ENCODE measurements at regions of chr19 and their contacts with region 1.

Region 1: GRCh38 chr19:1241417-1242095 is at the start of gene ATP5F1D:
- DNase-seq: peak; percentile 90 to 97
- H3K4me3 ChIP-seq: peak within 1 kb of the TSS; percentile 76 to 84
- H3K27ac ChIP-seq: peak within 1 kb of the TSS; percentile 98 to 99
- H3K4me1 ChIP-seq: peaks cover 15 to 86% (median 79%) of the 10 kb centered on the region in 4 donors
- H3K27me3 ChIP-seq: peaks cover 0 to 7% of the 10 kb centered on the region in 2 donors
- CTCF ChIP-seq: peak in 1 of 2 experiments; percentile 6

Region 2: GRCh38 chr19:1103708-1104310 is 137.7 kb before region 1 on chr19 and contains the start of gene GPX4:
- intact Hi-C with region 1: loop called (anchors 2 kb)
- DNase-seq: peak; percentile 99 to 100
- H3K4me3 ChIP-seq: peak within 1 kb of the TSS; percentile 95 to 98
- H3K27ac ChIP-seq: peak within 1 kb of the TSS; percentile 99 to 100
- H3K4me1 ChIP-seq: peaks cover 7 to 77% (median 63%) of the 10 kb centered on the region in 4 donors
- H3K27me3 ChIP-seq: no peaks in the 10 kb centered on the region
- CTCF ChIP-seq: peak in 1 of 2 experiments; percentile 6

Region 3: GRCh38 chr19:1113033-1113985 is 128.2 kb before region 1 on chr19:
- intact Hi-C with region 1: loop called (anchors 1 kb)
- DNase-seq: peak; percentile 97 to 98
- H3K4me3 ChIP-seq: no peak overlapping the region
- H3K27ac ChIP-seq: peak overlapping the region; percentile 76 to 84
- H3K4me1 ChIP-seq: peaks cover 0 to 27% (median 18%) of the 10 kb centered on the region in 4 donors
- H3K27me3 ChIP-seq: no peaks in the 10 kb centered on the region
- CTCF ChIP-seq: peak; percentile 94 to 96

Region 4: DNA sequence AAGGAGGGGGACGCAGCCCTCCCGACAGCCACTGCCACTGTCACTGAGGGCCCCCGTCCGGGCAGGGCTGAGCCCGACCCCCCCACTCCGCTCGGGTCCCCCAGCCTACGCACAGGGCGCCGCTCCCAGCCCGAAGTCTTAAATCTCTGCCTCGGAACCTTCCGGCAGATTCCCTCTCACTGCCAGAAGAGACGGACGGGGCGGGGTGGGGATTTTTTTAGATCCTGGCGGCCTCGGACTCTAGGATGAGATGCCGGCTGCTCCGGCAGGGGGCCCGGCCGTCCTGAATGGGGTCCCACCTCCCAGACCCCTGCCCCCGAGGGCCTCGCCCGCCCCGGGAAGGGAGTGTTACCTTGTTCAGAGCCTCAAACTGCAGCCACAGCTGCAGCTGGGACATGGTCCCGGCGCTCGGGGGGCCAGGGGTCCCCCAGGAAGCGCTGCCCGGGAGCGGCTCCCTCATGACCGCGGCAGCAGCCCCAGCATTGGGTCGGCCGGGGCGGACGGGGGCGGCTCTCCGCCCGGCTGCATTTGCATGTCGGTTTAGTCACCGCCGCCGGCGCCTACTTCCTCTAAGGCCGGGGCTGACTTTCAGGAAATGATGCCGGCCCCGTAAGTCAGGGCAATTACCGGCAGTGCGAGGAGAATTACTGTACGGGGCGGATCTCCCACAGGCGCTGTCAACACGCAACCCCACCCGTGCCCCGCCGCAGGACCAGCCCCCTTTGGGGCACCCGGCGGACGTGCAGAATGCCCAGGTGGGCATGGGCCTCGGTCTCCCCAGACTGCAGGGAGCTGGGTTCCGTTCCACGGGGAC is 109.6 kb before region 1 on chr19:
- intact Hi-C with region 1: no loop called
- DNase-seq: peak; percentile 92
- H3K4me3 ChIP-seq: peak overlapping the region; percentile 64 to 67
- H3K27ac ChIP-seq: peak overlapping the region; percentile 86
- H3K4me1 ChIP-seq: peaks cover 0 to 61% (median 48%) of the 10 kb centered on the region in 4 donors
- H3K27me3 ChIP-seq: no peaks in the 10 kb centered on the region
- CTCF ChIP-seq: peak; percentile 17 to 47

Region 5: DNA sequence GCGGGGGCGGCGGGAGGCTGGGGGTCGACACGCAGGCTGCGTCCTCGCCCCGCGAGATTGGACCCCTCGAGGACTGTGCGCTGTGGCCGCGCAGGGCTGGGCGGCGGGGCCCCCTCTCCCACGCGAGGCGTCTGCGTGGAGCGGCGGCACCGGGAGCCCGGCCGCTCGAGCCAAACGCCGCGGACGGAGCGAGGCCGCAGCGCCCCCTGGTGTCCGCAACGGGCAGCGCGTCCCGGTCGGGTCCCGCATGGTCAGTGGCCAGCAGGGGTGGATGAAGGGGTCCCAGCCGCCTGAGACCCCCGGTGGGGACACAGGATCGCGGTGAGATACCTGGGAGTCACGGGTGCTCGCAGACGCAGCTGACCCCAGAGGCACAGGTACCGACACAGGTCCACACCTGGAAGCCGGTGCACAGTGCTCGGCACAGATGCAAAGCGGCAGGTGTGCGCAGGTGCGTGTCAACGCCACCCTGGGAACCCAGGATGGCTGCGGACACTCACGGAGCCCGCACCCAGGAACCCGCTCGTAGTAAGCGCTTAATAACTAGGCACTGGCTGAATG is 25.4 kb after region 1 on chr19:
- intact Hi-C with region 1: loop called (anchors 1 kb)
- DNase-seq: peak; percentile 50 to 88
- H3K4me3 ChIP-seq: peak overlapping the region; percentile 50 to 68
- H3K27ac ChIP-seq: peak overlapping the region; percentile 83 to 84
- H3K4me1 ChIP-seq: peaks cover 7 to 81% (median 71%) of the 10 kb centered on the region in 4 donors
- H3K27me3 ChIP-seq: no peaks in the 10 kb centered on the region
- CTCF ChIP-seq: peak; percentile 93 to 99

Region 6: GRCh38 chr19:1490311-1491113 is 249.0 kb after region 1 on chr19 and contains the start of gene PCSK4:
- intact Hi-C with region 1: loop called (anchors 5 kb)
- DNase-seq: peak; percentile 98 to 99
- H3K4me3 ChIP-seq: peak within 1 kb of the TSS; percentile 50 to 63
- H3K27ac ChIP-seq: peak within 1 kb of the TSS; percentile 59 to 62
- H3K4me1 ChIP-seq: peaks cover 0 to 21% (median 16%) of the 10 kb centered on the region in 4 donors
- H3K27me3 ChIP-seq: peaks cover 0 to 21% of the 10 kb centered on the region in 2 donors
- CTCF ChIP-seq: no peak